Gastrocnemius medialis (tissue), 4 donors: ENCODE measurements at regions of chr10 and their contacts with region 1.

Region 1: GRCh38 chr10:6920072-6921019 is 340.3 kb upstream of the PRKCQ start:
- DNase-seq: peak; percentile 15 to 46
- ATAC-seq: peak; percentile 61 to 88
- H3K4me3 ChIP-seq: no peak overlapping the region
- H3K27ac ChIP-seq: no peak overlapping the region
- H3K4me1 ChIP-seq: peaks cover 0 to 7% of the 10 kb centered on the region in 2 donors
- H3K27me3 ChIP-seq: peaks cover 0 to under 1% (median 0%) of the 10 kb centered on the region in 3 donors
- CTCF ChIP-seq: peak in 4 of 5 experiments; percentile 29 to 68 (median 46)
- POLR2A ChIP-seq: no peak

Region 2: GRCh38 chr10:6987536-6987945 is 67.2 kb after region 1 on chr10:
- in situ Hi-C with region 1: no loop called
- intact Hi-C with region 1: no loop called
- DNase-seq: no peak
- ATAC-seq: no peak
- H3K4me3 ChIP-seq: no peak overlapping the region
- H3K27ac ChIP-seq: no peak overlapping the region
- H3K4me1 ChIP-seq: no peaks in the 10 kb centered on the region
- H3K27me3 ChIP-seq: no peaks in the 10 kb centered on the region
- CTCF ChIP-seq: no peak
- POLR2A ChIP-seq: no peak

Region 3: GRCh38 chr10:7243873-7244272 is 323.5 kb after region 1 on chr10:
- in situ Hi-C with region 1: no loop called
- intact Hi-C with region 1: loop called (anchors 10 kb)
- DNase-seq: no peak
- ATAC-seq: peak in 1 of 2 donors; percentile 62
- H3K4me3 ChIP-seq: no peak overlapping the region
- H3K27ac ChIP-seq: peak overlapping the region in 2 of 4 donors; percentile 19 to 42
- H3K4me1 ChIP-seq: peaks cover 0 to 5% of the 10 kb centered on the region in 2 donors
- H3K27me3 ChIP-seq: no peaks in the 10 kb centered on the region
- CTCF ChIP-seq: no peak
- POLR2A ChIP-seq: no peak